Uterus (tissue), 4 donors: ENCODE measurements at regions of chr3 and their contacts with region 1.

Region 1: DNA sequence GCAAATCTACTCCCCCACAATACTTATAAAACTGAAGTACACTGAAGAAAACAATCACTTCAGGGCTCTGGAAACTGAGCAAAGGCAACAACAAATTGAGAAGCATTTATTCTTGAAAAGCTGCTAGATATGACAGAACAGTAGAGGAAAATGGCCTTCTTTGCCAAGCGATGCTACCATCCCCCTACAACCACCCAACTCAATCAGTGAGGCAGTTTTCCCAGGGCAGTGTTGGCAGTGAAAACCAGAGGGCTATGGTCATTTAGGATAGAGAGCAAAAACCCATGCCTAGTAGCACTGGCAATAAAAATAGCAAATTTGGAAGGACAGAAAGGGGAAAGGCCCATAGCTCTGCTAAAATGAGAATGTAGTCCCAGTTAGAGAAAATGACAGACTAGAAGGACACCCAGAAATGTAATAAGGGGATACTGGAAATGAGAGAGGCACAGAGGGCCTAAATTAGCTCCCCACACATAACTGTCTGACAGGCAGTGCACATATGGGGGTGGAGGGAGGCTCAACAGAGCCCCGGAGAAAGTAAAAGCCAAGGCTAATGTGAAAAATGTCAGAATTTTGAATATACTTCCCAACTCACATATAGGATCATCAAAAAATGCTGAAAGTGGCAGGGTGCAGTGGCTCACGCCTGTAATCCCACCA is 143.5 kb downstream of the GSK3B start:
- DNase-seq: no peak
- H3K4me3 ChIP-seq: no peak overlapping the region
- H3K27ac ChIP-seq: no peak overlapping the region
- H3K4me1 ChIP-seq: no peaks in the 10 kb centered on the region
- H3K27me3 ChIP-seq: no peaks in the 10 kb centered on the region
- CTCF ChIP-seq: no peak
- POLR2A ChIP-seq: no peak

Region 2: DNA sequence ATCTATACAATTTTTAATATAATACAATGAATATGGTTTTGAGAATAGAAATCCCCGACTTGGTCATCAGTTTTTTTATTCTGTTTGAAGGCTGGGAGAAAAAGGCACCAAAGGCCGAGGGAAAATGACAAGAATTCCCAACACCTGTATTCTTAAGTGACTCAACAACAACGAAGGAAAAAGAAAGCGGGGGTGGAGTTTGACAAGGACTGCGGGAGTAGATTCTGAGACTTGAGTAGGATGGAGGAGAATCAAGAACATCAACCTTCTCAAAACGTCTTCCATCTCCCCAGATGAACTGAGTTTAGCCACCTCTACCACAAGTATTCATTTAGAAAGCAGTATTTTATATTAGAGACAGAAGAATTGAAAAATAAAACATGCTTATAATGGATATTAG is 1023.3 kb before region 1 on chr3:
- intact Hi-C with region 1: loop called (anchors 10 kb)
- DNase-seq: no peak
- H3K4me3 ChIP-seq: no peak overlapping the region
- H3K27ac ChIP-seq: no peak overlapping the region
- H3K4me1 ChIP-seq: no peaks in the 10 kb centered on the region
- H3K27me3 ChIP-seq: no peaks in the 10 kb centered on the region
- CTCF ChIP-seq: no peak
- POLR2A ChIP-seq: no peak

Region 3: DNA sequence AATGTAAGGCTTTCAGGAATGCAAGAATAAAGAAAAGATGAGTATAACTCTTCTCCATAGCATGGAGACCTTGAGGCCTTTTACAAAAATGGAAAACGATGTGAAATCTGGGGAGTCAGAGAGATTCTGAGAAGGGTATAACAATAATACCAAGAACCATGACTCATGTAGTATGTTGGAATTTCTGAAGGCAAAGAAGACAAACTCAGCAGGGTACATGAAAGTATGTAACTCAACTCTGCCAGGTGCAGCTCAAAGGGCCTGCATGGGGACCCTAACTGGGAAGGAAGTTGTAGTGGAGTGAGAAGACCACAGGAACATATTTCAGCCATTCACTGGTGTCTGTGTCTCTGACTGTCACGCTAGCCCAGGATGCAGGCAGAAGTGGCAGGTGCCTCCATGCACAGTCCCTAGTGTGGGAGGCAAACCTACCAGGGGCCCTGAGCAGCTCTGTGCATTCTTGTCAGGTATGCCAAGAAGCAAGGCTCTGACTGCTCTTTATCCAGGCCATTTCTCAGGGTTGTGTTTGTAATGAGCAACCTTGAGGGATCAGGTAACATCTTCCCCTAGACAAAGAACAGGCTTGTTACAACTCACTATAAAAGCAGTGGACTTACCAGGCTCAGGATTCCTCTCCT is 277.0 kb after region 1 on chr3:
- intact Hi-C with region 1: no loop called
- DNase-seq: no peak
- H3K4me3 ChIP-seq: no peak overlapping the region
- H3K27ac ChIP-seq: no peak overlapping the region
- H3K4me1 ChIP-seq: no peaks in the 10 kb centered on the region
- H3K27me3 ChIP-seq: no peaks in the 10 kb centered on the region
- CTCF ChIP-seq: no peak
- POLR2A ChIP-seq: no peak